GM13976 (cell line): ENCODE measurements at regions of chr5 and their contacts with region 1.

Region 1: DNA sequence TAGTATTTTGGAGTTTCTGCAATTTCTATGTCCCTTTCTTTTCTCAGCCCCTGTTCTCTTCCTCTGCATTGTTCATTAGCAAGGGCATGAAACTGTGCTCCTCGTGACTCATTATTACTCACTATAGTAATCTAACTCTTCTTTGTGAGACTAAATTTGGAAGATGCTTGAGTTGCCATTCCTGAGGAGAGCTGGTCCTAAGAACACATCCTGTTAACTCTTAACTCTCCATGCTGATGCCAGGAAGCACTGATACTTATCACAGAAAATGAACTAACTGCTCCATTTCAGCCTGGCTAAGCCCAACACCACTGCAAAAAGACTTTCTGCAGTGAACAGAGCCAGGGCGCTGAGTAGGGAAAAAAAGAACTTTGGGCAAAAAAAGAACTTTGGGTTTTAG is 10.6 kb upstream of the CSNK1A1 start:
- DNase-seq: no peak
- CTCF ChIP-seq: no peak

Region 2: DNA sequence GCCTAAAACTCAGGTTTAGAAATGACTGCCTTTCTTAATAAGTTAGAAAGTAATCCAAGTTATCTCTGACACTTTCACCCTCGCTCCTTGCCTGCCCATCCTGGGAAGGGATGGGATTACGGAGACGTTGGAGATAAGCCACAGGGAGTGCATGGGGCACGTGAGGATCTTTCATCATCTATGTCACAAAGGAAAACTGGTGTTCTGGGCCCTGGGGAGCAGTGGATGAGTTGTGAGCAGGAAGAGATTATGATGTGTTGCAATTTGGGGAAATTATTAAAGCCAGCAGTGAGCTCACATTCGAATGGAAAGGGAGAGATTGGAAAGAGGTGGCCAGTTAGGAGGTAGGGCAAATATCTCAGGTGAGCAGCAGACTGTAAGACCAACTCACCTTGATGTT is 277.3 kb before region 1 on chr5:
- in situ Hi-C with region 1: no loop called
- DNase-seq: no peak
- CTCF ChIP-seq: no peak

Region 3: DNA sequence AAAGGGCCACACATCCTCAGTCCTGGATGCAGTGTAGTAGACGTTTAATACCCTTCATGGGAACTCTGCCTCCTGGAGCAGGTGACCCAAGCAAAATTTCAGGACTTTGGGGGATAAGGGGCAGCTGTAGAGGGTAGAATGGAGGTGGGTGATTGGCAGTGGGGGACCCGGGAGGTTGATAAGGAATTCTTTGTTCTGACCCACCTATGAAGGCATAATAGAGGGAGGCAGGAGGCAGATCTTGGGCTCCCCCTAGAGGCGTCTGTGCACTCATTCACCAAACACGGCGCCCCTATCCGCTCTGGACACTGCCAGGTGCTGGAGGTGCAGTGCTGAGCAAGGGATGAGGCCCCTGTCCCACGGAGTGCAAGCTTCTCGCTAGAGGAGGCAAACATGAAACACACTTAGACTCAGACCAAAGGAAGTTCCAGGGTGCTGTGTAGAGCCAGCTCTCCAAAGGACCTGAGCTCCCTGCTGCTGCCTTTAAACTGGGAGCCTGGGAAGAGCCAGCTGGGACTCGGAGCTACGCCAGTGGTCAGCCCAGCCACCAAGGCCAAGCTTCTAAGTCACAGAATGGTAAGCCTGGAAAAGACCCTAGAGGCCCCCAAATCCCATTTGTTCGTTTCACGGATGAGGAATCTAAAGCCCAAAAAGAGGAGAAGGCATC is 190.4 kb before region 1 on chr5:
- in situ Hi-C with region 1: loop called (anchors 10 kb)
- DNase-seq: peak; percentile 84
- CTCF ChIP-seq: peak; percentile 78

Region 4: DNA sequence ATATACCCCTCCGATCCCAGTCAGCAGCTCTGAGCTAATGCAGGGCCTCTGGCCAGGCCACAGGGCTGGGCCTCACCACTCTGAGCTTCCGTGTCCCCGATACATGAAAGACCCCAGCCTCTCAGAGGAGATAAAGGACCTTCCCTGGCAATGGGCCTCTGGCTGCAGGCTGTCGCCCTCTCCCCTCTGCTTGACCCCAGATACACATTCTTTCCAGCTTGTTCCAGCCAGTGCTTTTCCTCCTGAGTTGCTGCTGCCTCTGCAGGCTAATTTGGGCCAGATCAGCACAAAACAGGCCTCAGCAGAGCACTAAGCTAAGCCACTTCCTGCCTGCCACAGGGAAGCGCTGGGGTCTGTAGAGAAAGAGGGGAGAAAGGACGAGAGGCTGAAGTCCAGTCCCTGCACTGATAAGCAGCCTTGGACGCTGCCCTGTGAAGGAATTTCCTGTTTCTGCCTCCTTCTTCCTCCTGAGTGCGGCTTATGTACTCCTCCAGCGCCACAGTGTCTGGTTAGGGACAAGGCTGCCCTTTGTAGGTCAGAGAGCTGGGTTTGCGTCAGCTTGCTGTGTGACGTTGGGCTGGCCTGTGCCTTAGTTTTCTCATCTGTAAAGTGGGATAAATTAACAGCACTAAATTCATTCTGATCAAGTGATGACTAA is 109.7 kb before region 1 on chr5:
- in situ Hi-C with region 1: loop called (anchors 10 kb)
- DNase-seq: no peak
- CTCF ChIP-seq: no peak